B cell (primary cell): ENCODE measurements at regions of chr20 and their contacts with region 1.

Region 1: GRCh38 chr20:23420943-23421931 is at the start of gene NAPB:
- DNase-seq: peak; percentile 92
- ATAC-seq: peak; percentile 98
- H3K4me3 ChIP-seq: peak within 1 kb of the TSS; percentile 50 to 92 (median 85)
- H3K4me3 Mint-ChIP-seq: peak within 1 kb of the TSS; percentile 91
- H3K27ac ChIP-seq: peak within 1 kb of the TSS; percentile 50 to 80
- H3K27ac Mint-ChIP-seq: peak within 1 kb of the TSS; percentile 90
- H3K4me1 ChIP-seq: peaks cover 13 to 14% of the 10 kb centered on the region in 2 donors
- H3K4me1 Mint-ChIP-seq: peaks cover 21% of the 10 kb centered on the region
- H3K27me3 ChIP-seq: no peaks in the 10 kb centered on the region
- H3K27me3 Mint-ChIP-seq: peaks cover 14% of the 10 kb centered on the region
- CTCF ChIP-seq: peak; percentile 44
- total RNA-seq, gene NAPB: 13.0 and 16.6 TPM in 2 replicates

Region 2: DNA sequence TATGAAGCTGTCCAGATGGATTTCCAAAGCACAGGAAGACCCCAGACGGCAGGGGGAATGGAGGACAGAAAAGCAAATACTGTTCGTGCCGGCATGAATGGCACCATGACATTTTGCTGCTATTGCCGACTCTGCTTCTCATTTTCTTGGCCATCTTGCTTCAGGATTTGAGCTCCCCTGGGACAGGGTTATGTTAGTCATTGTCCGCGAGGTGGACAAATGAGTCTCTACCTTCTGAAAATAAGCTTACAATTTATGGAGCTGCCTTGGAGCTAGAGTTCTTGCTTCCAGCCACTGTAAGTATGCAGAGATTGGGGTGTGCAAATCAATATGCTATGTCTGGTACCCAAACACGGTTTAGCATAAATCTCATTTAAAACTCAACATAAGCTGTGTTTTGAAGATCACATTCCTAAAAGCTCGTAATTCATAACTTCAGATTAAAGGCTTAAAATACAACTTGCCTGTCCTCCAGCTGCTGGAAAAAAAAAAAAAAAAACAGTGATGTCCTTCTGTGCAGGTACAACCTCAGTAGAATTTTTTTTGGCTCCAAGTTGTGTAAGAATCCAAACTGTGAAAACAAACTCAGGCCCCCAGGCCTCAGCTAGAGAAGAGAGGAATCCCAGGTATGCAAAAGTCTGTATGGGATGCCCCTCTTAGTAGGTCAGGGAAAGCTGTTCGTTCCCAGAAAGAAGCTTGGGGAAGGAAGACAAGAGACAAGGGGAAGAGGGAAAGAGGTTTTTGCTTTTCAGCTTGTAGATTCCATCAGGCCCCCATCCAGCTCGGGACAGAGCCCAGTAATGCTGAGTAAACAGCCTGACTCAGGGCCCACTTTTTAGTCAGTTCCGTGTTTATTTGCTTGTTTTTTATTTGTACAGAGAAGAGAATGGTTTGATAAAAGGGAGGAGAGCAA is 652.7 kb before region 1 on chr20:
- CTCF ChIA-PET with region 1: no interaction called
- POLR2A ChIA-PET with region 1: no interaction called
- intact Hi-C with region 1: no loop called
- DNase-seq: no peak
- ATAC-seq: no peak
- H3K4me3 ChIP-seq: no peak overlapping the region
- H3K4me3 Mint-ChIP-seq: no peak overlapping the region
- H3K27ac ChIP-seq: no peak overlapping the region
- H3K27ac Mint-ChIP-seq: no peak overlapping the region
- H3K4me1 ChIP-seq: no peaks in the 10 kb centered on the region
- H3K4me1 Mint-ChIP-seq: no peaks in the 10 kb centered on the region
- H3K27me3 ChIP-seq: no peaks in the 10 kb centered on the region
- H3K27me3 Mint-ChIP-seq: peaks cover 9% of the 10 kb centered on the region
- CTCF ChIP-seq: no peak

Region 3: GRCh38 chr20:23287354-23288190 is 133.7 kb before region 1 on chr20:
- CTCF ChIA-PET with region 1: no interaction called
- POLR2A ChIA-PET with region 1: no interaction called
- intact Hi-C with region 1: no loop called
- DNase-seq: no peak
- ATAC-seq: no peak
- H3K4me3 ChIP-seq: no peak overlapping the region
- H3K4me3 Mint-ChIP-seq: no peak overlapping the region
- H3K27ac ChIP-seq: no peak overlapping the region
- H3K27ac Mint-ChIP-seq: no peak overlapping the region
- H3K4me1 ChIP-seq: no peaks in the 10 kb centered on the region
- H3K4me1 Mint-ChIP-seq: no peaks in the 10 kb centered on the region
- H3K27me3 ChIP-seq: no peaks in the 10 kb centered on the region
- H3K27me3 Mint-ChIP-seq: peaks cover 12% of the 10 kb centered on the region
- CTCF ChIP-seq: no peak

Region 4: GRCh38 chr20:23320317-23320716 is 100.9 kb before region 1 on chr20:
- CTCF ChIA-PET with region 1: no interaction called
- POLR2A ChIA-PET with region 1: no interaction called
- intact Hi-C with region 1: no loop called
- DNase-seq: no peak
- ATAC-seq: no peak
- H3K4me3 ChIP-seq: no peak overlapping the region
- H3K4me3 Mint-ChIP-seq: no peak overlapping the region
- H3K27ac ChIP-seq: no peak overlapping the region
- H3K27ac Mint-ChIP-seq: no peak overlapping the region
- H3K4me1 ChIP-seq: no peaks in the 10 kb centered on the region
- H3K4me1 Mint-ChIP-seq: no peaks in the 10 kb centered on the region
- H3K27me3 ChIP-seq: no peaks in the 10 kb centered on the region
- H3K27me3 Mint-ChIP-seq: peaks cover 13% of the 10 kb centered on the region
- CTCF ChIP-seq: peak; percentile 16

Region 5: GRCh38 chr20:23350196-23350903 is 70.9 kb before region 1 on chr20 and contains the start of gene NXT1:
- CTCF ChIA-PET with region 1: interaction called, 36 read pairs
- POLR2A ChIA-PET with region 1: interaction called, 18 read pairs
- intact Hi-C with region 1: no loop called
- DNase-seq: peak; percentile 98
- ATAC-seq: peak; percentile 83
- H3K4me3 ChIP-seq: peak within 1 kb of the TSS; percentile 82 to 96 (median 85)
- H3K4me3 Mint-ChIP-seq: peak within 1 kb of the TSS; percentile 97
- H3K27ac ChIP-seq: peak within 1 kb of the TSS; percentile 96 to 98
- H3K27ac Mint-ChIP-seq: peak within 1 kb of the TSS; percentile 99
- H3K4me1 ChIP-seq: peaks cover 19 to 23% of the 10 kb centered on the region in 2 donors
- H3K4me1 Mint-ChIP-seq: peaks cover 30% of the 10 kb centered on the region
- H3K27me3 ChIP-seq: no peaks in the 10 kb centered on the region
- H3K27me3 Mint-ChIP-seq: no peaks in the 10 kb centered on the region
- CTCF ChIP-seq: no peak
- total RNA-seq, gene NXT1: 21.4 and 22.5 TPM in 2 replicates

Region 6: DNA sequence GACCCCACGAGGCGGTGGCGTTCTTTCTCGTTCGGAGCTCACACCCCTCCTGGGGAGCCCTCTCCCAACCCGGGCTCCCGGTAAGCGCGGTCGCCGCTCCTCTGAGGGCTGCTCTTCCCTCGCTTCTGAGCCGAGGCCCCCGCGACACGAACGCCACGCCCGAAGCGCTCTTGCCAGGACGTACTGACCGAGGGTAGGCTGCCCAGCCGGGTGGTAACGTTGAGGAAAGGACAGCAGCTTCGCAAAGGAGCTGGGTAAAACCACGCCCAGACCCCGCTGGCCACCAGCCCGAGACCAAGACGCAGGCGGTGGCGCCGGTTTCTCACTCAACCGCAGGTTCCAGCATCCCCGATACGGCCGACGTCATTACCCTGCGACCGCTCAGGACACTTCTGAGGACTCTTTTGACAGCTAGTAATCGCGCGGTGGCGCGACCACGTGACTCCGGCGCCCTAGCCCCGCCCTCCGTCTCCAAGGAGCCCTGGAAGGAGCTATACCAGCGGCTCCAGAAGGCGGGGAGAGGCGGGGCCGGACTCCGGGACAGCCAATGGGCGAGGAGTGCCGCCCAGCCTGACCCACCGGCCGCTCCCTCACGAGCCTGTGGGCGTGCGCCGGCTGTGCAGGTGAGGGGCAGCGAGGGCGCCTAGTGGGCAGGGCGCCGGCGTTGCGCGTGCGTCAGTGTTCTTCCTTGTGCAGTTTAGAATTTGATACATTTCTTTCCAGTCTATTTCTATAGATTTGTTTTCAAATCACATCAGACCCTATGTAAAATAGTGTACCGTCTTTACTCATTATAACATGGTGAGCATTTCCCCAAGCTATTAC is 63.3 kb before region 1 on chr20:
- CTCF ChIA-PET with region 1: interaction called, 4 read pairs
- POLR2A ChIA-PET with region 1: no interaction called
- intact Hi-C with region 1: loop called (anchors 1 kb)
- DNase-seq: peak; percentile 100
- ATAC-seq: peak; percentile 75
- H3K4me3 ChIP-seq: peak overlapping the region; percentile 68 to 88 (median 83)
- H3K4me3 Mint-ChIP-seq: peak overlapping the region; percentile 94
- H3K27ac ChIP-seq: peak overlapping the region; percentile 94 to 98
- H3K27ac Mint-ChIP-seq: peak overlapping the region; percentile 97
- H3K4me1 ChIP-seq: peaks cover 20 to 33% of the 10 kb centered on the region in 2 donors
- H3K4me1 Mint-ChIP-seq: peaks cover 33% of the 10 kb centered on the region
- H3K27me3 ChIP-seq: no peaks in the 10 kb centered on the region
- H3K27me3 Mint-ChIP-seq: no peaks in the 10 kb centered on the region
- CTCF ChIP-seq: no peak

Region 7: DNA sequence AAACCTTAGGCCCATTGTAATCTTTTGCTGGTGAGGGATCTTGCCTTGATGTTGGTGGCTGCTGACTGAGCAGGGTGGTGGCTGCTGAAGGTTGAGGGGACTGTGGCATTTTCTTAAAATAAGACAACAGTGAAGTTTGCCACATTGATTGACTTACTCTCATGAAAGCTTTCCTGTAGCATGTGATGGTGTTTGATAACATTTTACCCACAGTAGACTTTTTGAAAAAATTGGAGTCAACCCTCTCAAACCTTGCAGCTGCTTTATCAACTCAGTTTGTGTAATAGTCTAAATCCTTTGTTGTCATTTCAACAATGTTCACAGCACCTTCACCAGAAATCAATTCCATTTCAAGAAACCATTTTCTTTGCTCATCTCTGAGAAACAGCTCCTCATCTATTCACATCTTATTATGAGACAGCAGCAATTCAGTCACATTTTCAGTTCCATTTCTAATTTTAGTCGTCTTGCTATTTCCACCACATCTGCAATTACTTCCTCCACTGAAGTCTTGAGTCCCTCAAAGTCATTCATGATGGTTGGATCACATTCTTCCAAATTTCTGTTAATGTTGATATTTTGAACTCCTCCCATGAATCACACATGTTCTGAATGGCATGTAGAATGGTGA is 109.8 kb after region 1 on chr20:
- CTCF ChIA-PET with region 1: no interaction called
- POLR2A ChIA-PET with region 1: no interaction called
- intact Hi-C with region 1: no loop called
- DNase-seq: no peak
- ATAC-seq: no peak
- H3K4me3 ChIP-seq: no peak overlapping the region
- H3K4me3 Mint-ChIP-seq: no peak overlapping the region
- H3K27ac ChIP-seq: no peak overlapping the region
- H3K27ac Mint-ChIP-seq: no peak overlapping the region
- H3K4me1 ChIP-seq: no peaks in the 10 kb centered on the region
- H3K4me1 Mint-ChIP-seq: no peaks in the 10 kb centered on the region
- H3K27me3 ChIP-seq: no peaks in the 10 kb centered on the region
- H3K27me3 Mint-ChIP-seq: no peaks in the 10 kb centered on the region
- CTCF ChIP-seq: no peak